GM10248 (cell line): ENCODE measurements at regions of chr3 and their contacts with region 1.

Region 1: DNA sequence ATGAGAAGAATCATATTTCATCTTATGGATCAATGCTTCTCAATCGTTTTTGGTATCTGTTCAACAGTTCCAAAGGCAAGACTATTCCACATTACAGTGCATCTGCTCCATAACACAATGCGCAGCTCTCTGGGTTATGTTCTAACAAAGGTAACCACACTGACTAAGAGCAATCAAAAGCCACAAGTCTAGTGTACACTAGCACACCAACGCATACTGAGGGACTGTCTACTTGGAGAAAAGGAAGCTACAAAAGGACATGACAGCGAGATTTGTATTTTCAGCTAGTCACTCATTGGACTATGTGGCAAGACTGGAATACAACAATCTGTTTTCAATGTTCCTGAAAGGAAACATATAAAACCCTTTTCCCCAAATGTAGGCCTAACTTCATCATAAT is 35.8 kb downstream of the SETD2 start:
- DNase-seq: no peak
- CTCF ChIP-seq: no peak

Region 2: DNA sequence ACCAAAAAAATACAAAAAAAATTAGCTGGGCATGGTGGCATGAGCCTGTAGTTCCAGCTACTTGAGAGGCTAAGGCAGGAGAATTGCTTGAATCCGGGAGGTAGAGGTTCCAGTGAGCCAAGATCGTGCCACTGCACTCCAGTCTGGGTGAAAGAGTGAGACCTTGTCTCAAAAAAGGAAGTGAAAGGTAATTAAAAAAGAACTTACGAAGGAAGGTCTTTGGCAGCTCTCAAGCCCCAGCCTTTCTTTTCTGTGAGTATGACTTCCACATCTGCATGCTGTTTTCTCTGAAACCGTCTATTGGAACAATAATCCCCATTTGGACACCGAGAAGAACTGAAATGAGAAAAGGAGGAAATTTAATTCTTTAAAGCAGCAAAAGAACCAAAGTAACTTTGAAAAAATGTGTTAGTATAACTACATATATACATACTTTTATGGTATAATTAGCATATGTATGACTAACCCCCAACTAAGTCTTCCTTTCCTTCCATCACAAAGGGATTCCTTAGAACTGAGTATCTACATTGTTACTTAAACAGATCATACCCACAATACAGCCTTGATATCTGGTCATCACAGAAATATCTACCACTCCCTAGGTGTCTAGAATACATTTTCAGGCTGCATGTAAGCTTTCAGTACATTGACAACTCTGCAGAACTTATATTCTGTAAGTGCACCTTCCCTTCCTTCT is 14.3 kb before region 1 on chr3:
- CTCF ChIA-PET with region 1: interaction called, 11 read pairs
- POLR2A ChIA-PET with region 1: no interaction called
- DNase-seq: peak; percentile 25
- CTCF ChIP-seq: no peak

Region 3: DNA sequence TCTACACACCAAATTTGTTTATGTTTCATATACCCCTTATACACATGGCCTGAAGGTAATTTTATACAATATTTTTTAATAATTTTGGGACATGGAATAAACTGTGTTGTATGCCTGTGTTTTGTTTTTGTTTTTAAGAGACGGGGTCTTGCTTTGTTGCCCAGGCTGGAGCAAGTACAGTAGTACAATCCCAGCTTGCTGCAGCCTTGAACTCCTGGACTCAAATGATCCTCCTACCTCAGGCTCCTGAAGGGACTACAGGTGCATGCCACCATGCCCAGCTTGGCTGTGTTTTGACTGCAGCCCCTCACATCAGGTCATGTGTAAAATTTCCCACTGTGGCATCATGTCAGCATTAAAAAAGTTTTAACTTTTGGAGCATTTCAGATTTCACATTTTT is 17.1 kb after region 1 on chr3:
- CTCF ChIA-PET with region 1: interaction called, 13 read pairs
- POLR2A ChIA-PET with region 1: interaction called, 8 read pairs
- DNase-seq: no peak
- CTCF ChIP-seq: no peak

Region 4: DNA sequence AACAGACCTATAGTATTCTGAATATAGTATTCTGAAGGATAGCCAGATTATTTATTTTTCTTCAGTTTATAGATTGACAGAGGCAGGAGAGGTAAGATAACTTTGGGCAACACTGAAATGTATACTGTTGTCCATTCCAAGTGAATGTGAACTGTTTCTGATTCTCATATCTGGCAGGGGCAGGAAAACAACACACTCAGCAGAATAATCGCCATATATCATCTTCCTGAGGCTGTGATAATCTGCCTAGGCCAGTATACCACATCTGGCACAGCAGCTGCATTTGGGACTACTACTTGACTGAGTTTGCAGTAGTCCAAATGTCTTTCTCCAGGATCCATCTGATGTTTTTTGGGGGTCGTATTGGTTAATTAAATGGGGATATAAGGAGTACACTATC is 58.1 kb after region 1 on chr3:
- CTCF ChIA-PET with region 1: no interaction called
- POLR2A ChIA-PET with region 1: no interaction called
- DNase-seq: no peak
- CTCF ChIP-seq: no peak